AG04449 (cell line): ENCODE measurements at regions of chr3 and their contacts with region 1.

Region 1: GRCh38 chr3:126134219-126134975 is 46.0 kb downstream of the ALDH1L1 start:
- DNase-seq: no peak
- H3K4me3 ChIP-seq: no peak overlapping the region
- CTCF ChIP-seq: peak; percentile 83

Region 2: GRCh38 chr3:126100634-126101301 is 33.6 kb before region 1 on chr3:
- CTCF ChIA-PET with region 1: interaction called, 16 read pairs
- POLR2A ChIA-PET with region 1: no interaction called
- DNase-seq: peak; percentile 51
- H3K4me3 ChIP-seq: no peak overlapping the region
- CTCF ChIP-seq: no peak

Region 3: GRCh38 chr3:126124148-126124868 is 10.1 kb before region 1 on chr3:
- CTCF ChIA-PET with region 1: interaction called, 44 read pairs
- POLR2A ChIA-PET with region 1: no interaction called
- DNase-seq: no peak
- H3K4me3 ChIP-seq: no peak overlapping the region
- CTCF ChIP-seq: no peak

Region 4: GRCh38 chr3:126197854-126198584 is 63.6 kb after region 1 on chr3:
- CTCF ChIA-PET with region 1: interaction called, 52 read pairs
- POLR2A ChIA-PET with region 1: no interaction called
- DNase-seq: no peak
- H3K4me3 ChIP-seq: no peak overlapping the region
- CTCF ChIP-seq: peak; percentile 89

Region 5: GRCh38 chr3:126389112-126389793 is 254.9 kb after region 1 on chr3:
- CTCF ChIA-PET with region 1: interaction called, 74 read pairs
- POLR2A ChIA-PET with region 1: no interaction called
- DNase-seq: no peak
- H3K4me3 ChIP-seq: peak overlapping the region; percentile 56
- CTCF ChIP-seq: peak; percentile 97

Region 6: DNA sequence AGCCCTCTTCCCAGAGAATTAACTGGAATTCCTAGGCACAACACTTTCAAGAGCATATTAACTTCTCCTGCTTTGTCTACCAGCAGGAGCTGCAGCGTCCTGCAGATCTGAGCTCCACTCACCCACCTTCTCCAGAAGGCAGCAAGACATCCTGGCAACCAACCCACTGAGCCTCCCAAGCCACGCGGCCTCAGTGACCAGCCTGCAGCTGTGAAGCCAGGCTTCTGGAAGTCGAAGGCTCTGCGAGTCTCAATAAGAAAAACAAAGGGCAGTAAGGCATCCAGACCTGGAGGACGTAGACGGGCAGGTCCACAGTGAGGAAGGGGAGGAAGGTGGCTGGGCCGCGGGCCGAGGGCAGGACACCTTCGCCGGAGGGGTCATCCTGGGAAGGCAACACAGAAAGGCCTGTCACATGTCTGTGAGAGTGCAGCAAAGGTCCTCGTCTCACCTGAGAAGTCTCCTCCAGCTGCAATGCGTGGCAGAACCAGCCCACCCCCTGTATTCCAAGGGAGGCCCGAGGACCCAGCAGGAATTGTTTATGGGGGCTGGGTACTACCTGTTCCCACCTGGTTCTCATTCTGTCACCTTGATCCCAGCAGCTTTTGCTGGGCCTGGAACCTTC is 305.1 kb after region 1 on chr3:
- CTCF ChIA-PET with region 1: interaction called, 10 read pairs
- POLR2A ChIA-PET with region 1: no interaction called
- DNase-seq: no peak
- H3K4me3 ChIP-seq: no peak overlapping the region
- CTCF ChIP-seq: no peak

Region 7: GRCh38 chr3:126798521-126798920 is 664.1 kb after region 1 on chr3:
- CTCF ChIA-PET with region 1: no interaction called
- POLR2A ChIA-PET with region 1: no interaction called
- DNase-seq: no peak
- H3K4me3 ChIP-seq: no peak overlapping the region
- CTCF ChIP-seq: no peak